ENCODE measurements at regions of chr2 and their contacts with region 1.

Region 1: DNA sequence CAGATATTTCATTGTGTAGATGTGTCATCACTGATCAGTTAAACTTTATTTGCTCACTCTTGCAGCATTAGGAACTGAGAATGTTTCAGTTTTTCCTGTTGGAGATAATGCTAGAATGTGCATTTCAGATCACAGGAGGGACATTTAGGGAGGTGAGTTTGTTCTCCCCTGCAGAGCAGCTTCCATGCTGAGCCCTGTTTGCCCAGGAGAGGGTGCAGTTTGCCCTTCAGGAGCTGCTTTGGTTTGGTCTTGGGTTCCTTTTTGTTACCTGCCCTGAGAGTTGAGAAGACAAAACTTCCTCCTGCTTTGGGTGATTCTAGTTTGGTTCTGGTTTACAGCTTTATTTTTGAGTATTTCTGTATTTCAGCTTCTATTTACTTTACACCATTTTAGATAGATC is 49.9 kb downstream of the DGKD start:
- DNase-seq: no peak
- H3K4me3 ChIP-seq: no peak overlapping the region
- H3K27ac ChIP-seq: no peak overlapping the region
- H3K27me3 ChIP-seq: no peaks in the 10 kb centered on the region
- CTCF ChIP-seq: peak; percentile 74

Region 2: DNA sequence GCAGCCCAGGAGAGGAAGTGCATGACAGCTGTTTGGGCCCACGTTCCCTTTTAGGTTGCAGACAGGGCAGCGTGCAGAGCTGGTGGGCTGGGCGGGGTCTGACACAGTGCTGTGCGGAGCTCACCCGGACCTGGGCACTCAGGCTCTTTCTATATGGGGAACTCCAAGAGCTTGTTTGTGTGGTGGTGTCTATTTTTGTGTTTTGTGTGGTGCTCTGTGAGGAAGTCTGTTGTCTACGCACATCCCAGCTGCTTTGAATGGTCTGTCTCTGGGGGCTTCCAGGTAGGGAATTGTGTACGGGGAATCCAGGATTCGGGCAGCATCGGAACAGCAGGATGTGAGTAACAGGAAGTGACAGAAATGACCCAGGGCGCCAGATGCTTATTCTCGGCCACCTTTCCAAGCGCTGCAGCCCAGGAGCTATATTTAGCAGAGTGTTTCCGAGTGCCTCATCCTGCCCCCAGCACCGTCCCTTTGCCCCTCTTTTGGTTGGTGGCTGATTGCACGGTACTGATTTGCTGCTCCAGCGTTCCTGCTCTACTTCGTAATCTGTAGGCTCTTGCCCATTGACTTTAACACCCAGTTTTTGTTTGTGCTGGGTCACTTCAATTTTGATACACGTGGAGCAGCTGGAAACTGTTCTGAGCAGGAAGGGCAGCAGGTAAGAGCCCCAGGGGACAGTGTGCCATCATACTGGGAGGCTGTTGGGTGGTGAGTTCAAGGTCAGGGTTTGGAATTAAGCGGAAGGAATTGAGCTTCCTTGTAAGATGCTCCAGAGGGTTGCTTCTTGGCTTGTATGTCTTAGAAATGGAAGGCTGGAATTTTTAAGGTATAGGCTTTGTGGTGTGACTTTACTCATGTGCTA is 14.8 kb after region 1 on chr2:
- CTCF ChIA-PET with region 1: interaction called, 11 read pairs
- POLR2A ChIA-PET with region 1: no interaction called
- DNase-seq: no peak
- H3K4me3 ChIP-seq: no peak overlapping the region
- H3K27ac ChIP-seq: no peak overlapping the region
- H3K27me3 ChIP-seq: no peaks in the 10 kb centered on the region
- CTCF ChIP-seq: no peak

Region 3: DNA sequence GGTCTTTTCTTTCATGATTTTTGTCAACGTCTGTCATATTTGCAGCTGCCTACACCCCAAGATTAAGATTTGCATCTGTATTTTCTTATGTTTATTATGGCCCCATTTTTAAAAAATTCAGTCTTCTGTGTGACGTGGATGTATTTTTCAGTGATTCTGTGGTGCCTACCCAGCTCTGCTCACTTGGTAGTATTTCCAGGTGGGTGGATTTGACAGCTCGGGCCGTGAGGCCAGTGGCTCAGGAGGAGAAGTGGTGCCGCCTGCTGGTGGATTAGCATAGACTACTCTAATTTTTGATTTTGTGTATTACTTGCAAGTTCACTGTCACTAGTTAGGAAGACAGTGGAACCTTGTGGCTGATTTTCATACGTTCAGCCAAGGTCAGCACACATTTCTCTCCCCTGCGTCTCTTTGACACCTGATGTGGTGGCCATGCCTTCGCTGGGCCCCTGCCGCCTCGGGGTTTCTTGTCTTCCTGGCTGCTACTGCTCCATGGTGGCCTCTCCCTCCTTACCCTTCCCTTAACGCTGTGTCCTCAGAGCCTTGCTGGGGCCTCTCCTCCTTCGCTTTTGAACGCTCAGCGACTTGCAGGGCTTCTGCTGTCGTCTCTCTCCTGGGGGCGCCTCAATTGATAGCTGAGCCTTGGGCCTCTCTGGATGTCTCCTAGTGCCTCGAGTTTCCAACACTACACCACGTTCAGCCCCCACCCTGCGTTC is 39.4 kb after region 1 on chr2:
- CTCF ChIA-PET with region 1: interaction called, 66 read pairs
- POLR2A ChIA-PET with region 1: no interaction called
- DNase-seq: peak; percentile 68
- H3K4me3 ChIP-seq: no peak overlapping the region
- H3K27ac ChIP-seq: no peak overlapping the region
- H3K27me3 ChIP-seq: no peaks in the 10 kb centered on the region
- CTCF ChIP-seq: peak; percentile 90

Region 4: DNA sequence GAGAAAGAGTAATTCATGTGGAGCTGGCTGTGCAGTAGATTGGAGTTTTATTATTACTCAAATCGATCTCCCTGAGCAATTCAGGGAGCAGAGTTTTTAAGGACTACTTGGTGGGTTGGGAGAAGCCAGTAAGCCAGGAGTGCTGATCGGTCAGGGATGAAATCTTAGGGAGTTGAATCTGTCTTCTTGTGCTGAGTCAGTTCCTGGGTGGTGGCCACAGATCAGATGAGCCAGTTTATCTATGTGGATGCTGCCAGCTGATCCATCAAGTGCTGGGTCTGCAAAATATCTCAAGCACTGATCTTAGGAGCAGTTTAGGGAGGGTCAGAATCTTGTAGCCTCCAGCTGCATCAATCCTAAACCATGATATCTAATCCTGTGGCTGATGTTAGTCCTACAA is 196.2 kb after region 1 on chr2:
- CTCF ChIA-PET with region 1: no interaction called
- POLR2A ChIA-PET with region 1: no interaction called
- DNase-seq: no peak
- H3K4me3 ChIP-seq: no peak overlapping the region
- H3K27ac ChIP-seq: no peak overlapping the region
- H3K27me3 ChIP-seq: peaks cover 7% of the 10 kb centered on the region
- CTCF ChIP-seq: no peak